CD4-positive, alpha-beta T cell (primary cell): ENCODE measurements at regions of chr11 and their contacts with region 1.

Region 1: GRCh38 chr11:73177778-73178577 is 35.9 kb upstream of the FCHSD2 start:
- DNase-seq: peak; percentile 71 to 89 (median 75)
- ATAC-seq: peak; percentile 100
- H3K4me3 ChIP-seq: no peak overlapping the region
- H3K4me3 Mint-ChIP-seq: no peak overlapping the region
- H3K27ac ChIP-seq: no peak overlapping the region
- H3K27ac Mint-ChIP-seq: no peak overlapping the region
- H3K4me1 ChIP-seq: peaks cover 7% of the 10 kb centered on the region
- H3K4me1 Mint-ChIP-seq: no peaks in the 10 kb centered on the region
- H3K27me3 ChIP-seq: no peaks in the 10 kb centered on the region
- H3K27me3 Mint-ChIP-seq: no peaks in the 10 kb centered on the region
- CTCF ChIP-seq: peak; percentile 78

Region 2: DNA sequence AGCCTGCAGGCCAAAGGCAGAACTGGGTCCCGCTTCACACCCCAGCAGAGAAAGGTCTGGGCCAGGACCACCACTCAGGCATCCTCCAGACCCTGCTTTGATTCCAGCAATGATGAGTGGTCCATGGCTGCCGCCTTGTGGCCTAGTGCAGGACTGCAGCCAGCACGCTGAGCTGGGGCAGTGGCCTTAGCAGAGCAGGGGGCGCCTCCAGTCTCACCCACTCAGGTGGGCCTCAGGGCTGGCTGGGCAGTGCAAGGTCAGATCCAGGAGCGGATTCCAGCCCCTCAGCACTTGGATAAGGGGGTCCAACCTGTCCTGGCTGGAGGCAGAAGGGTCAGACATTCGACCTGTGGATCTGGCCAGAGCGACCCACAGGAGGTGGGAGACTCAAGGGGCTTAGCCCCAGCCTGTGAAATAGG is 494.2 kb before region 1 on chr11:
- CTCF ChIA-PET with region 1: no interaction called
- POLR2A ChIA-PET with region 1: no interaction called
- intact Hi-C with region 1: loop called in 1 of 2 experiments (anchors 1 kb)
- DNase-seq: peak; percentile 49 to 76 (median 60)
- ATAC-seq: peak; percentile 86
- H3K4me3 ChIP-seq: no peak overlapping the region
- H3K4me3 Mint-ChIP-seq: no peak overlapping the region
- H3K27ac ChIP-seq: no peak overlapping the region
- H3K27ac Mint-ChIP-seq: no peak overlapping the region
- H3K4me1 ChIP-seq: peaks cover 4% of the 10 kb centered on the region
- H3K4me1 Mint-ChIP-seq: peaks cover 12% of the 10 kb centered on the region
- H3K27me3 ChIP-seq: no peaks in the 10 kb centered on the region
- H3K27me3 Mint-ChIP-seq: no peaks in the 10 kb centered on the region
- CTCF ChIP-seq: peak; percentile 88

Region 3: GRCh38 chr11:72831513-72832300 is 346.3 kb before region 1 on chr11:
- CTCF ChIA-PET with region 1: interaction called, 23 read pairs
- POLR2A ChIA-PET with region 1: interaction called, 8 read pairs
- intact Hi-C with region 1: loop called (anchors 1 kb)
- DNase-seq: peak; percentile 27 to 75 (median 49)
- ATAC-seq: peak; percentile 80
- H3K4me3 ChIP-seq: no peak overlapping the region
- H3K4me3 Mint-ChIP-seq: no peak overlapping the region
- H3K27ac ChIP-seq: peak overlapping the region in 1 of 2 donors; percentile 31
- H3K27ac Mint-ChIP-seq: peak overlapping the region; percentile 79
- H3K4me1 ChIP-seq: peaks cover 15% of the 10 kb centered on the region
- H3K4me1 Mint-ChIP-seq: peaks cover 13% of the 10 kb centered on the region
- H3K27me3 ChIP-seq: no peaks in the 10 kb centered on the region
- H3K27me3 Mint-ChIP-seq: no peaks in the 10 kb centered on the region
- CTCF ChIP-seq: peak; percentile 81

Region 4: DNA sequence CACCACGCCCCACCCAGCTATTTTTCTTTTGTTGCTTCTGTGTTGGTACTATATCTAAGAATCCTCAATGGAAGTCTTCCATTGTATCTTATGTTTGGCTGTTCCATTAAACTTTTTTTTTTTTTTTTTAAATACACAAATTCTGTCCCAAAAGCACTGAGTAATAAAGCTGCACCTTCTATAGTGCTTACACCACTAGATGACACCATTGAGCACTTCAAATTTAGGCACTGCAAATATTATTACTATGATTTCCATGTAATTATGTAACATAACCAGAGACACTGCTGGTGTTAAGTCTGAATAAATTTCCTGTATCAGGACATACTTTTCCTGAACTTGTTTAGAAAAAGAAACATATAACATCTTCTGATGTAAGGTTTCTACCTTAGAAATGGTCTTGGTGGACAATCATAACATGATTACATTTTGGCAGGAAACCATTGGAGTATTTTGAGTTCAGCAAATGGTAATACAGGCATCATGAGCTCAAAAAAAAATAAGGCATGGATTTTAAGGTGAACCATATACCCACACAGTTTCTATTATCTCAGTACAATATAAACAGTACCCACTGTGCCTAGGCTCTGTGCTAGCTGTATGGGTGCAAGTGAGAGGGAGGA is 253.3 kb before region 1 on chr11:
- CTCF ChIA-PET with region 1: interaction called, 12 read pairs
- POLR2A ChIA-PET with region 1: interaction called, 5 read pairs
- intact Hi-C with region 1: loop called (anchors 1 kb)
- DNase-seq: peak in 3 of 14 experiments; percentile 53 to 59 (median 53)
- ATAC-seq: peak; percentile 37
- H3K4me3 ChIP-seq: no peak overlapping the region
- H3K4me3 Mint-ChIP-seq: no peak overlapping the region
- H3K27ac ChIP-seq: no peak overlapping the region
- H3K27ac Mint-ChIP-seq: peak overlapping the region; percentile 48
- H3K4me1 ChIP-seq: no peaks in the 10 kb centered on the region
- H3K4me1 Mint-ChIP-seq: peaks cover 8% of the 10 kb centered on the region
- H3K27me3 ChIP-seq: no peaks in the 10 kb centered on the region
- H3K27me3 Mint-ChIP-seq: no peaks in the 10 kb centered on the region
- CTCF ChIP-seq: peak; percentile 61

Region 5: DNA sequence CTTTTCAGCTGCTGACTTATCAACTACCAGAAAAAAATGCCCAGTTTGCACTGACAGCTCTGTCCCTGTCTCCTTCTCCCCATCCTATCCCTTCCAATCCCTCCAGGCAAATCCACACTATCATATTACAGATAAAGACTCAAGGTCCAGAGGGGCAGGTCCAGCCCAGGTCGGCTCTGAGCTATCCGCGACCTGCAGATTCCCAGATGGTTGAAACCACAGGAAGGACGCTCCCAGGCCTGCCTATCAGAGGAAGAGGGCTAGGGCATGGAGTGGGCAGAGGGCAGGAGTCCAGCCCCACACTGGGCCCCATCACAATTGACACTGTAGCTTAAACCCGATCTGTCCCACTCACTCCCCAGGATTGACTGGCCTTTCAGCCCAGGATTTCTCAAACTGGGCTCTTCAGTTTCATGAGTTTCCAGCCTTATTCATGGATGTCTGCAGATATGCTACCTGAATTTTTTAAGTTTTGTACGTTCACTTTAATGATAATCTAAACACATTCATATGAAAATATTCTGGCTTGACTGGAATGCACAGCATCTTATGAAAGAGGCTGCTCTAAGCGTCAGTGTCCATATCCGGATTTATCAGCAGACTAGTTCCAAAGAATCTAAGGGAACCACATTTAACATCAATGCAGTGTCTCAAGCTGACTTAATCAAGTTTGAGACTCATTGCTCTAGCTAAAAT is 19.5 kb before region 1 on chr11:
- CTCF ChIA-PET with region 1: no interaction called
- POLR2A ChIA-PET with region 1: no interaction called
- intact Hi-C with region 1: no loop called
- DNase-seq: no peak
- ATAC-seq: no peak
- H3K4me3 ChIP-seq: no peak overlapping the region
- H3K4me3 Mint-ChIP-seq: no peak overlapping the region
- H3K27ac ChIP-seq: no peak overlapping the region
- H3K27ac Mint-ChIP-seq: no peak overlapping the region
- H3K4me1 ChIP-seq: peaks cover 48% of the 10 kb centered on the region
- H3K4me1 Mint-ChIP-seq: peaks cover 30% of the 10 kb centered on the region
- H3K27me3 ChIP-seq: no peaks in the 10 kb centered on the region
- H3K27me3 Mint-ChIP-seq: no peaks in the 10 kb centered on the region
- CTCF ChIP-seq: no peak